ENCODE measurements at regions of chr17 and their contacts with region 1.

Region 1: GRCh38 chr17:74736513-74737298 is at the start of gene RAB37:
- DNase-seq: peak; percentile 46
- H3K4me3 Mint-ChIP-seq: peak within 1 kb of the TSS; percentile 89
- H3K27ac Mint-ChIP-seq: peak within 1 kb of the TSS; percentile 84
- H3K4me1 Mint-ChIP-seq: peaks cover 50% of the 10 kb centered on the region
- H3K27me3 Mint-ChIP-seq: peaks cover 4% of the 10 kb centered on the region
- total RNA-seq, gene RAB37: 6.0 and 6.1 TPM in 2 replicates

Region 2: DNA sequence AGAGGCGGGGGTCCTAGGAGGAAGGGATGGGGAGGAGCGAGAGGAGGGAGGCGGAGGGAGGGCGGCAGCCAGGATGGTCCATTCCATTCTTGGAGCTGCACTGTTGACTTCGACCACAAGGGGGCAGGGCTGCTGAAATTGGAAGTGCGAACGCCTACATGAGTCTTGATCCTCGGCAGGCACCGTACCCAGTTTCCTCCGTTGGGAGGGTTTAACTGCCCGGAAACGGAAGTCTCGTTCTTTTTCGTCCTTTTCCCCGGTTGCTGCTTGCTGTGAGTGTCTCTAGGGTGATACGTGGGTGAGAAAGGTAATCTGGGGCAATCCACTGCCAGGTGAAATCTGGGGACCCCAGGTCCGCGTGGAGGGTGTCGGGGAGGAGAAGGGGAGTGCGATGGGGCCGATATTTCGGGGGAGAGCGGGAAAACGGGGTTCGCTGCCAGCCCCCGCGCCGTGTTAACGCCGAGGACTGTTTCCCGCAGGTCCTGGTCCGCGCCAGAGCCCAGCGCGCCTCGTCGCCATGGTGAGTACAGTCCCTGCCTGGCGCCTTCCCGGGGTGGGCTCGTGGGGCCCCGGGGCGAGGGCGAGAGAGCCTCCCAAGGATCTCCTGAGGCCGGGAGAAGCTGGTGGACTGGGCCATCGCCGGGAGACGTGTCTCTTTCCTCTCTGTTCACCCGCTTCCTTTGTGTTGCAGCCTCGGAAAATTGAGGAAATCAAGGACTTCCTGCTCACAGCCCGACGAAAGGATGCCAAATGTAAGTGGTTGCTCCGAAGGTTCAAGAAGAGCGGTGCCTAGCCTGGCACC is 533.1 kb before region 1 on chr17 and contains the start of gene RPL38:
- intact Hi-C with region 1: loop called (anchors 5 kb)
- DNase-seq: peak; percentile 91
- H3K4me3 Mint-ChIP-seq: peak within 1 kb of the TSS; percentile 99
- H3K27ac Mint-ChIP-seq: peak within 1 kb of the TSS; percentile 99
- H3K4me1 Mint-ChIP-seq: peaks cover 35% of the 10 kb centered on the region
- H3K27me3 Mint-ChIP-seq: peaks cover 23% of the 10 kb centered on the region
- total RNA-seq, gene RPL38: 1,123 and 1,161 TPM in 2 replicates

Region 3: DNA sequence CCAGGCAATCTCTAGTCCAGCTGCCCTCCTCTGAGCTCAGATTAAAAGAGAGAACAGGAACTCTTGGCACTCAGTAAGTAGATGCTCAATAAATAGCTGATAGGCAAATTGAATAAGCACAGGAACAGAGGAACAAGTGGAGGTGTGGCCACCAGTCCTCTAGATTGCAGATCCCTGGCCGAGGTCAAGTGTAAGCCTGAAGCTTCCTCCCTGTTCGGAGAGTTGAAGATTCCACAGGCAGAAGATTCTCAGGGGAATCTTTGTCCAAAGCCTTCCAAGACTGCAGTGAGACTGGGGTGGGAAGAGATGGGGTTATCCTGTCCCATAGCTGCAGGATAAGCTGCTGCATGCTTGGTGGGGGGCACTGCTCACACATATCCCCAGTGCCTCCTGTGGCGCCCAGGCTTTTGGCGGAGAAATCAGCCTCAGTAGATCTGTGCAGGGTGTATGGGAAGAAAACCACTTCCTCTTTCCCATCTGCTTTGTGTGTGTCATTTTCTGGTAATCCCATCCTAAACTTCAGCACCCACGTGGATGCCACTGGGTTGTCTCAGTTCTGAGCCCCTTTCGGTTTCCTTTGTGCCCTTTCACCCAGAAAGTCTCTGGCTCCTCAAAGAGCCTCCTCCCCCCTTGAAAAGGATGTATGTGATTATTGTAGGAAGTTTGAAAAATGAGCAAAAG is 258.1 kb before region 1 on chr17:
- intact Hi-C with region 1: loop called (anchors 10 kb)
- DNase-seq: peak; percentile 57
- H3K4me3 Mint-ChIP-seq: peak overlapping the region; percentile 67
- H3K27ac Mint-ChIP-seq: peak overlapping the region; percentile 83
- H3K4me1 Mint-ChIP-seq: peaks cover 63% of the 10 kb centered on the region
- H3K27me3 Mint-ChIP-seq: no peaks in the 10 kb centered on the region

Region 4: DNA sequence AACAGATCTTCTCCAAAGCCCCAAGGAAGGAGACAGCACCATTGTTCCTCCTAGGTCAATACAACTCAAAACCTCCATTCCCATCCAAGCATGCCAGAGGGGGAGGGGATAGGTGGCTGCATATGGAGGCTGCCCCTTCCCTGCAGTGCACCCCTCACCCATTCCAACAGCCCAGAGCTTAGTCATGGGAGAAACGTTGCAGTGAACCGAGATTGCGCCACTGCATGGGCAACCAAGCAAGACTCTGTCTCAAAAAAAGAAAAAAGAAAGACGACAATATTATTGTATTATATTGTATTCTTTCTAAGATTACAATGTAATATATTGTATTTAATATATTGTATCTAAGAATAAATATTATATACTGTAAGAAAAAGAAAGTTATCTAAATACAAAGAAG is 76.8 kb before region 1 on chr17:
- intact Hi-C with region 1: loop called (anchors 1 kb)
- DNase-seq: no peak
- H3K4me3 Mint-ChIP-seq: no peak overlapping the region
- H3K27ac Mint-ChIP-seq: no peak overlapping the region
- H3K4me1 Mint-ChIP-seq: peaks cover 8% of the 10 kb centered on the region
- H3K27me3 Mint-ChIP-seq: peaks cover 59% of the 10 kb centered on the region

Region 5: DNA sequence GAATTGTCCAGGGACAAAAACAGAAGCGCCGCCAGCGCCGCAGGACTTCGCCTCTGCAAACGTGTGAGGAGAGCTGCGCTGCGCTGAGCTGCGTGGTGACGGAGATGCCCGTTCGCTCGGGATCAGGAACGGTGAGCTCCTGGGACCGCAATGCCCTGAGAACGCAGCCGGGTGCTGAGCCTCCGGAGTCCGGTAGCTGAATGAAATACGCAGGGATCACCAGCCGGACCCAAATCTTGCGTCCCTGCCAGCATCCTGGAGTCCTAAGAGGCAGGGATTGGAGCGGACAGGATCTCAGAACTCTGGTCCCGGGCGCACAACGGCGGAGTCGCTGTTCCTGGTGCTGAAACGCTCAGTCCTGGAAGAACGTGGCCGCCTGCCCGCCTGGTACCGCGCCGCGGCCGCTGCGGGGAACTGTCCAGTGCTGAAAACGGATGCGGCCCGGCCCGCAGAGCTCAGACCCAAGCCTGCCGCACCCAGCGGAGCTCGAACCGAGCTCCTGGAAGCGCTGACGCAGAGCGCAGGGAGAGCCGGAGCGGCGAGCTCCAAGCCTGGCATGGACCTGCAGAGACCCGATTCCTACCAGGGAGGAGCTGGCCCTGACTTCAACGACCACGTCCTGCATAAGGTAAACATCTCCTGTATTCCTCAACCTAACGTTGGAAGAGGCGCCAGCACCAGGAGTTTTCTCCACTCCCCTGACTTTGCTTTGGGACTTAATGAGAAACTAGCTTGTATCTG is 65.5 kb before region 1 on chr17:
- intact Hi-C with region 1: loop called (anchors 5 kb)
- DNase-seq: peak; percentile 67
- H3K4me3 Mint-ChIP-seq: no peak overlapping the region
- H3K27ac Mint-ChIP-seq: no peak overlapping the region
- H3K4me1 Mint-ChIP-seq: no peaks in the 10 kb centered on the region
- H3K27me3 Mint-ChIP-seq: peaks cover 65% of the 10 kb centered on the region